ENCODE measurements at regions of chr3 and their contacts with region 1.

Region 1: DNA sequence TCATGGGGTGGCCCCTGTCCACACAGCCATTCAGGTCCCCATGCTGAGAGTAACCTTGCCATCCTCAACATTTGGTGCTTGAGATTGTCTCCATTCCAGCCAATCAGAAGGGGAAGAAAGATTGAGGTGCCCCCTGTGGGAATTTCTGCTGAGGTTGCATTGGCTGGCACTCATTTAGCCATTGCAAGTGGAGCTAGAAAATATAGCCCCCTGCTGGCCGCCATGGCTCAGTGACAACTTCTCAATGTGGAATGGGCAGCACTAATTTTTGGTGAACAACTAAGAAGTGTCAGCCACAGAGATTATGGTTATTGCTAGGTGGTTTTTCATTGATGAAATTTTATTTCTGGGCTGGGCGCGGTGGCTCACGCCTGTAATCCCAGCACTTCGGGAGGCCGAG is 22.0 kb downstream of the COL6A6 start:
- DNase-seq: peak; percentile 61
- H3K4me3 Mint-ChIP-seq: no peak overlapping the region
- H3K27ac Mint-ChIP-seq: no peak overlapping the region
- H3K4me1 Mint-ChIP-seq: no peaks in the 10 kb centered on the region
- H3K27me3 Mint-ChIP-seq: peaks cover 17% of the 10 kb centered on the region

Region 2: DNA sequence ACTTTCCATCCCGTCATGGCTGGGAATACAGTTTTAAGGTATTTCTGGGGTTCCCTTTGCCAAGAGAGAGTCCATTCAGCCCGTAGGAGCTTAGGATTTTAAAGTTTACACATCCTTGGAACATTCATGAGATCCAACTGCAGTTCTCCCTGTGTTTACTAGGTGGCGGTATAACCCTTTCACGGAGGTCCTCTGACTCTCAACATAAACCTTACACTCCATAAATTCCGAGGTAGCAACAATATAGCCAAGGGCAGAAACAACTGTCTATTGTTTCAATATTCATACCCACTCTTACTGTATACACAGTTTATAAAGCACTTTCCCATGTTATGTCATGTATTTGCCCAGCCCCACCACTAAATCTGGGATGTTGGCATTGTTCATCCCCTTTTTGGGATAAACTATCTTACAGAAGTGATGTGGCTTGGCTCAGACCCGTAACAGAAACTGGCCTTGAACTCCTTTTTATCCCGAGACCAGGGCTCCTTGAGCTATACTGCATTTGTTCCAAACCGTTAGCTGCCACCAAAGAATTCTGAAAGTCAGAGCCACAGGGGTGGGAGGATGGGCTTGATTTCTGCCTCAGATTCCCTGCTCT is 262.7 kb before region 1 on chr3:
- CTCF ChIA-PET with region 1: interaction called, 5 read pairs
- intact Hi-C with region 1: loop called (anchors 1 kb)
- DNase-seq: peak; percentile 18
- H3K4me3 Mint-ChIP-seq: no peak overlapping the region
- H3K27ac Mint-ChIP-seq: no peak overlapping the region
- H3K4me1 Mint-ChIP-seq: no peaks in the 10 kb centered on the region
- H3K27me3 Mint-ChIP-seq: peaks cover 25% of the 10 kb centered on the region

Region 3: DNA sequence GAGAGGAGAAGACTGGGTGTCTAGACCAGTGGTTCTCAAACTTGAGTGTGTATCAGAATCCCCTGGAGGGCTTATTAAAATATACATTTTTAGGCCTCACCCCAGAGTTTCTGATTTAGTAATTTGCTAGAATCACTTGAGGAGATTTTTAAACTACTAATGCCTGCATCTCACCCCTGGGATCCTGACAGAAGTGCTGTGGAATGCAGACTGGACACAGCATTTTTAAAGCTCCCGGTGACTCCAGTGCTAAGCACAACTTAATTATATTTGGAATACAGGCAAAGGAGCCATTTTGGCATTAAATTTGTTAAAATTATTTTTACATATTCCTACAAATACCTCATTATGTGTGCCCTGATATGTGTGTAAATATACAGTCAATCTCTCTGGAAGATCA is 48.8 kb before region 1 on chr3:
- CTCF ChIA-PET with region 1: no interaction called
- intact Hi-C with region 1: loop called (anchors 2 kb)
- DNase-seq: no peak
- H3K4me3 Mint-ChIP-seq: no peak overlapping the region
- H3K27ac Mint-ChIP-seq: no peak overlapping the region
- H3K4me1 Mint-ChIP-seq: no peaks in the 10 kb centered on the region
- H3K27me3 Mint-ChIP-seq: peaks cover 6% of the 10 kb centered on the region

Region 4: DNA sequence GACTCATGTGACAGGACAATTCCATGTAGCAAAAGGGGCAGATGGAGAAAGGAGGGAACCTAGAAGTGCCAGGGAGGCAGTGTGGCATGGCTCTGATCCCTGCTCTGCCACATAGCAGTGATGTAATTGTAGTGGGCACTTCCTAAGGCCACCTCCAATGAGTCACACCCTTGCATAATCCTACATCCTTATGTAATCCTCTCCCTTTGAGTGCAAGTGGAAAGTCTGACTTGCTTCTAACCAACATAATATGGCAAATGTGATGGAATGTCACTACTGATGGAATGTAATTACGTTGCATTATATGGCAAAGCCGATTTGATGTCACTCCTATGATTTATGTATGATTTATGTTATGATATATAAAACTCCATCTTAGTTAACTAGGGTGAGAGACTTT is 282.0 kb after region 1 on chr3:
- CTCF ChIA-PET with region 1: no interaction called
- intact Hi-C with region 1: no loop called
- DNase-seq: no peak
- H3K4me3 Mint-ChIP-seq: no peak overlapping the region
- H3K27ac Mint-ChIP-seq: no peak overlapping the region
- H3K4me1 Mint-ChIP-seq: no peaks in the 10 kb centered on the region
- H3K27me3 Mint-ChIP-seq: no peaks in the 10 kb centered on the region

Measured in activated naive CD4-positive, alpha-beta T cell treated with anti-CD3 and anti-CD28 coated beads for 36 hours (primary cell).